ENCODE measurements at regions of chr17 and their contacts with region 1.

Region 1: GRCh38 chr17:30236766-30237165 is 1.3 kb upstream of the SLC6A4 start:
- DNase-seq: peak; percentile 44
- H3K4me3 ChIP-seq: no peak overlapping the region
- H3K27ac ChIP-seq: no peak overlapping the region
- H3K4me1 ChIP-seq: peaks cover 8% of the 10 kb centered on the region
- H3K27me3 ChIP-seq: peaks cover 51 to 54% of the 10 kb centered on the region in 2 experiments
- CTCF ChIP-seq: peak; percentile 26 to 65
- POLR2A ChIP-seq: no peak

Region 2: GRCh38 chr17:30134551-30134950 is 102.2 kb before region 1 on chr17:
- CTCF ChIA-PET with region 1: no interaction called
- POLR2A ChIA-PET with region 1: no interaction called
- dilution Hi-C with region 1: no loop called
- intact Hi-C with region 1: loop called (anchors 5 kb)
- DNase-seq: no peak
- H3K4me3 ChIP-seq: no peak overlapping the region
- H3K27ac ChIP-seq: no peak overlapping the region
- H3K4me1 ChIP-seq: no peaks in the 10 kb centered on the region
- H3K27me3 ChIP-seq: no peaks in the 10 kb centered on the region
- CTCF ChIP-seq: no peak
- POLR2A ChIP-seq: no peak

Region 3: GRCh38 chr17:30309591-30309990 is 72.8 kb after region 1 on chr17:
- CTCF ChIA-PET with region 1: no interaction called
- POLR2A ChIA-PET with region 1: no interaction called
- dilution Hi-C with region 1: no loop called
- intact Hi-C with region 1: no loop called
- DNase-seq: no peak
- H3K4me3 ChIP-seq: no peak overlapping the region
- H3K27ac ChIP-seq: no peak overlapping the region
- H3K4me1 ChIP-seq: no peaks in the 10 kb centered on the region
- H3K27me3 ChIP-seq: peaks cover 0 to 4% of the 10 kb centered on the region in 2 experiments
- CTCF ChIP-seq: no peak
- POLR2A ChIP-seq: no peak